ENCODE measurements at regions of chr9 and their contacts with region 1.

Region 1: GRCh38 chr9:115524453-115525059 is 406.6 kb upstream of the TNC start:
- DNase-seq: peak; percentile 73
- H3K4me3 Mint-ChIP-seq: no peak overlapping the region
- H3K27ac Mint-ChIP-seq: no peak overlapping the region
- H3K4me1 Mint-ChIP-seq: no peaks in the 10 kb centered on the region
- H3K27me3 Mint-ChIP-seq: no peaks in the 10 kb centered on the region
- CTCF ChIP-seq: peak; percentile 67

Region 2: DNA sequence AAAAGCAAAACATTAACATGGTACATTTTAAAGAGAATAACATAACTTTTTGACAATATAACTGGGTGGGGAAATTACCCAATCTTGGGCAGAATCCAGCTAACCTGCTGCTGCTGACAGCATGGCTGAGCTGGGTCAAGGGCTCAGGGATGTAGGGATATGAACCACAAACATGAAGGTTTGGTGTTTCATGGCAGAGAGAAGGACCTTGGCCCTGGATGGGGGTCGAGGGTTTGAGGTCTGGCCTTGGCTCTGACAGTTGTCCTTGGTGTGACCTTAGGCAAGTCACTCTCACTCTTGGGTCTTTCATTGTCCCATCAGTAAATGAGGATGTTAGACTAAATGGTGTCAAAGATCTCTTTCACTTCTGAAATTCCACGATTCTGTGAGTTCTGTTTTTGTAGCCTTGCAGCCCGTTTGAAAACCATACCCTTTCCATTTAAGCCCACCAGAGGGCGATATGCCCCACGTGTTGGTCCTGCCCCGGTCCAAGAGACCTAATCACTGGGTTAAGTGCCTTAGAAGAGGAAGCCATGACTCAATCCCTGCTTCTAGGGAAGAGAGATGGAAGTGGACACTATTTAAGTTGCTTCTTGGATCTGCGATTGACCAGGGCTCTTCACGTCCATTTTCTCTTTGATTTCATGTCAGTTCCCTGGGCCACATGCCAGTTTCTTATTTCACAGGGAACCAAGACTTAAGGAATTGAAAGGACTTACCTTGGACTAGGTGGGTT is 785.8 kb before region 1 on chr9:
- CTCF ChIA-PET with region 1: interaction called, 4 read pairs
- POLR2A ChIA-PET with region 1: no interaction called
- intact Hi-C with region 1: loop called (anchors 5 kb)
- DNase-seq: peak; percentile 87
- H3K4me3 Mint-ChIP-seq: no peak overlapping the region
- H3K27ac Mint-ChIP-seq: no peak overlapping the region
- H3K4me1 Mint-ChIP-seq: peaks cover 23% of the 10 kb centered on the region
- H3K27me3 Mint-ChIP-seq: no peaks in the 10 kb centered on the region
- CTCF ChIP-seq: peak; percentile 85

Region 3: GRCh38 chr9:114779352-114779845 is 745.2 kb before region 1 on chr9:
- CTCF ChIA-PET with region 1: no interaction called
- POLR2A ChIA-PET with region 1: no interaction called
- intact Hi-C with region 1: no loop called
- DNase-seq: peak; percentile 83
- H3K4me3 Mint-ChIP-seq: no peak overlapping the region
- H3K27ac Mint-ChIP-seq: no peak overlapping the region
- H3K4me1 Mint-ChIP-seq: peaks cover 15% of the 10 kb centered on the region
- H3K27me3 Mint-ChIP-seq: peaks cover 40% of the 10 kb centered on the region
- CTCF ChIP-seq: no peak

Region 4: DNA sequence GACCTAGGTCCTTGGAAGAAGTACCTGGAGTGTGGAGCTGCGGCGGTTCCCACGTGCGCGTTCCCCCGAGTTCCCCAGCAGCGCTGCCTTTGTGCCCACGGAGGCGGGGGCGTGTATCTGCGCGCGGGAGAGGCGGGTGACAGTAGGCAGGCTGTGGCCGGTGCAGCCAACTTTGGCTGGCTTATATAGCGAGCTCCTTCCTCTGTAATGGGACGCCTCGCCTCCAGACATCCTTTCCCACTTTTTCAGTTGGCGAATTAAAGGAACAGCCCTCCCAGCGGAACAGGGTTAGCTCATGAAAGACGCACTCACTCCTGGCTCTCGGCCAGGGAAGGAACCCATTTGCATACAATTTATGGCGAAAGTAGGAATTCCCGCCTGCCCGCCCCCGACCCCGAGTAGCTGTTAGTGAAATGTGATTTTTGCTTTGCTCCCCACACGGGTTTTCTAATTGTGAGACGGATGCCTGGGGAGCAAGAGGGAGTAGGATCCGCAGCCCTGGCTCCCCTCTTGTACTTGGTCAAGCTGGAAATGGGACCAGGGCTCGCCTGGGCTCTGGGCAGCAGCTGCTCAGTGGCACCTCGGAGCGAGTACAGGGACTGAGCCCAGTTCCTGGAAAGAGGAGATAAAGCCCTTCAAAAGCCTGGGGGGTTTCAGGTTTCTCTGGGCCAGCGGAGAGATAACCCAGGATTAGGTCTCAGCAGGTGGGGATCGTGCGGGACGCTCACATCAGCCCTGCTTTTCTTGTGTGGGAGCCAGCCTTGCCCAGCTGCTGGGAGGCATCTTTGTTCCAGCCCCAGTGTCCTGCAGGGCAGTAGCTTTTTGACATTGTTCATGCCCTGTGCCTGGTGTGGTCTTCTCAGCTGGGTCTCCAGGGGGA is 406.3 kb before region 1 on chr9 and contains the start of gene TNC:
- CTCF ChIA-PET with region 1: interaction called, 4 read pairs
- POLR2A ChIA-PET with region 1: interaction called, 4 read pairs
- intact Hi-C with region 1: loop called (anchors 5 kb)
- DNase-seq: peak; percentile 93
- H3K4me3 Mint-ChIP-seq: peak within 1 kb of the TSS; percentile 74
- H3K27ac Mint-ChIP-seq: peak within 1 kb of the TSS; percentile 23
- H3K4me1 Mint-ChIP-seq: peaks cover 35% of the 10 kb centered on the region
- H3K27me3 Mint-ChIP-seq: no peaks in the 10 kb centered on the region
- CTCF ChIP-seq: no peak
- total RNA-seq, gene TNC: 49.8 and 82.4 TPM in 2 replicates

Region 5: DNA sequence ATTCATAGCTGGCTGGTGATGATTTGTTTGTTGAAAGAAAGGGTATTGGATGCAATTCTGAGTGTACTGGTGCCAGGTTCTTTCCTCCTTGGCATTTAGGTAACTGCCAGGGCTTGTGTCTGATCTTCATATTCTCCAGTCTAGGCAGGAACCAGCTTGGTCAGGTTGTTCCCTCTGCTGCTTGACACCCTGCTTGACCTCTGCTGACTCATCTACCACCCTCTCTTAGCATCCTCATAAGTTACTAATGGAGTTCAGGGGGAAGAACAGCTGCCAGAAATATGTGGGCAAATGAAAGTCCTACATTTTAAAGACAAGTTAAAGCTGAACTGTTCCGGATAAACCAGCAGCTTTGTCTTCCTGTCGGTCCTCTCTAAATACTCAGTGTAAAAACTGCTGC is 290.5 kb before region 1 on chr9:
- CTCF ChIA-PET with region 1: interaction called, 24 read pairs
- POLR2A ChIA-PET with region 1: interaction called, 4 read pairs
- intact Hi-C with region 1: no loop called
- DNase-seq: peak; percentile 81
- H3K4me3 Mint-ChIP-seq: no peak overlapping the region
- H3K27ac Mint-ChIP-seq: no peak overlapping the region
- H3K4me1 Mint-ChIP-seq: peaks cover 26% of the 10 kb centered on the region
- H3K27me3 Mint-ChIP-seq: no peaks in the 10 kb centered on the region
- CTCF ChIP-seq: no peak

Region 6: DNA sequence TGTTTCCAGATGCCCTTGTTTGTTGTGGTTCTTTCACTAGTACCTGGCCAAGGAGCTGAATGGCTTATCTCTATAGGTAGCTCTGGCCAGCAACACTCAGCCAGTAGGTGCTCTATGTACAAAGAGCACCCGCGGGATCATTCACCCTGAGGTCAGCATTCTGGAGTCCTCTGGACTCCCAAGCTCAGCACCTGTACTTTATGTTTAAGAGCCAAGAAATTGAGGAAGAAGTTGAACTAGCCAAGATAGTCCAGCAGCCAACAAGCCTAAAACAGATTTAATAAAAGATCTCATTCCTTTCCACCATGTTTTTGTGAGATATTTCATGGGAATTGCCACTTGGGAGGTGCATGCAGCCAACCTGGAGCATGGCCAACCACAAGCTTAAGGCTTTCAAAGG is 386.4 kb after region 1 on chr9:
- CTCF ChIA-PET with region 1: no interaction called
- POLR2A ChIA-PET with region 1: no interaction called
- intact Hi-C with region 1: no loop called
- DNase-seq: no peak
- H3K4me3 Mint-ChIP-seq: no peak overlapping the region
- H3K27ac Mint-ChIP-seq: no peak overlapping the region
- H3K4me1 Mint-ChIP-seq: no peaks in the 10 kb centered on the region
- H3K27me3 Mint-ChIP-seq: no peaks in the 10 kb centered on the region
- CTCF ChIP-seq: no peak

Measured in MCF 10A (cell line).